ENCODE measurements at regions of chr1 and their contacts with region 1.

Region 1: DNA sequence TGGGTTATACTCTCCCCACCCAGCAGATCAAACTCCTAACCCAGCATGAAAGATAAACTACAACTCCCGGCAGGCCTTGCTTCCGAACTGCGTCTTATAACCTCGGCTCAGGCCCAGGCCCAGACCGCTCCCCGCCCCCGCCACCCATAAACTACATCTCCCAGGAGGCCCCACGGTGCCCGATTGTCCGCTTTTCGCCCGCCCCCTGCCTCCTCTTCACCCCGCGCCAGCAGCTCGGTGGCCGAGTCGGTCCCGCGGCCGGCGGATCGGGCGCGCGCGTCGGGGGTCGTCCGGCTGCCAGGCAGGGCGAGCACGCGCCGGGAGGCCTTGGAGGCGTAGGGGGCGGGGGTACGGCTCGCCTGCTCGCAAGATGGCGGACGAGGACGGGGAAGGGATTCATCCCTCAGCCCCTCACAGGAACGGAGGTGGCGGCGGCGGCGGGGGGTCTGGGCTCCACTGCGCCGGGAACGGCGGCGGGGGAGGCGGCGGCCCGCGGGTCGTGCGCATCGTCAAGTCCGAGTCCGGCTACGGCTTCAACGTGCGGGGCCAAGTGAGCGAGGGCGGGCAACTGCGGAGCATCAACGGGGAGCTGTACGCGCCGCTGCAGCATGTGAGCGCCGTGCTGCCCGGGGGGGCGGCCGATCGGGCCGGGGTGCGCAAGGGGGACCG is at the start of gene SNX27:
- DNase-seq: peak; percentile 94
- H3K4me3 Mint-ChIP-seq: peak within 1 kb of the TSS; percentile 93
- H3K27ac Mint-ChIP-seq: peak within 1 kb of the TSS; percentile 72
- H3K4me1 Mint-ChIP-seq: peaks cover 48% of the 10 kb centered on the region
- H3K27me3 Mint-ChIP-seq: peaks cover 3% of the 10 kb centered on the region
- total RNA-seq, gene SNX27: 22.9 to 23.6 TPM

Region 2: GRCh38 chr1:151254217-151255213 is 357.5 kb before region 1 on chr1 and contains the start of gene PSMD4:
- CTCF ChIA-PET with region 1: interaction called, 3 read pairs
- intact Hi-C with region 1: loop called (anchors 1 kb)
- DNase-seq: peak; percentile 97
- H3K4me3 Mint-ChIP-seq: peak within 1 kb of the TSS; percentile 95
- H3K27ac Mint-ChIP-seq: peak within 1 kb of the TSS; percentile 92
- H3K4me1 Mint-ChIP-seq: peaks cover 31% of the 10 kb centered on the region
- H3K27me3 Mint-ChIP-seq: peaks cover 2% of the 10 kb centered on the region
- total RNA-seq, gene PSMD4: 167 to 192 TPM

Region 3: DNA sequence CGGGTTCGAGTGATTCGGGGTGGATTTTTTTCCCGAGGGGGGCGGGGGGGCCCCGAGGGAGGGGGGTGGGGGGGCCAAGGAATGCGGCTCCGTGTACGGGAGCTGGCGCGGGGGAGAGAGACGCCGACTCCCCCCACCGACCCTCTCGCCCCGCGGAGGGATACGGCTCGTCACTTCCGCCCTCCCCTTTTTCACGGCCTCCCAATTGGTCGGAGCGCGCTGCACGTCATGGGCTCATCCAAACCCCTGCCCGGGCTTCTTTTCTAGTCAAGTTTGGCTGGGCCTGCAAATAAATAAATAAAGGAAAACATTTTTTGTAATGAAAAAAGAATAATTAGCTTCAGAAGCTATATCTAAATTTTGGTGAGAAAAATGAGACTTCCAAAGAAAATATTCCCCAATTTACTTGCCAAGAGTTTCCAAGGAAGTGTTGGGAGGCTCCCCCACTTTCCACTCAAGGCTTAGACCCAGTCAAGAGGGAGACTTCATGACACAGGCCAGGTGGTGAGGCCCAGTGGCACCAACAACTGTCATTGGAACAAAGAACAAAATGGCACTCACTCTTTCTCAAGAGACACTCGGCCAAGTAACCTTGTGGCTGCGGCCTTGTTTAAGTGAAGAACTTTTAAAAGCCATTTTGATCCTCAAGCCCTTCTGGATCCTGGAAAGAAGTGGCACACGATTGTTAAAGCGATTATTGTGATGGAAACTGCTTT is 152.5 kb before region 1 on chr1 and contains the start of gene POGZ:
- CTCF ChIA-PET with region 1: no interaction called
- intact Hi-C with region 1: loop called (anchors 5 kb)
- DNase-seq: peak; percentile 97
- H3K4me3 Mint-ChIP-seq: peak within 1 kb of the TSS; percentile 78
- H3K27ac Mint-ChIP-seq: peak within 1 kb of the TSS; percentile 86
- H3K4me1 Mint-ChIP-seq: peaks cover 29% of the 10 kb centered on the region
- H3K27me3 Mint-ChIP-seq: peaks cover 11% of the 10 kb centered on the region
- total RNA-seq, gene POGZ: 69.7 to 73.7 TPM

Region 4: DNA sequence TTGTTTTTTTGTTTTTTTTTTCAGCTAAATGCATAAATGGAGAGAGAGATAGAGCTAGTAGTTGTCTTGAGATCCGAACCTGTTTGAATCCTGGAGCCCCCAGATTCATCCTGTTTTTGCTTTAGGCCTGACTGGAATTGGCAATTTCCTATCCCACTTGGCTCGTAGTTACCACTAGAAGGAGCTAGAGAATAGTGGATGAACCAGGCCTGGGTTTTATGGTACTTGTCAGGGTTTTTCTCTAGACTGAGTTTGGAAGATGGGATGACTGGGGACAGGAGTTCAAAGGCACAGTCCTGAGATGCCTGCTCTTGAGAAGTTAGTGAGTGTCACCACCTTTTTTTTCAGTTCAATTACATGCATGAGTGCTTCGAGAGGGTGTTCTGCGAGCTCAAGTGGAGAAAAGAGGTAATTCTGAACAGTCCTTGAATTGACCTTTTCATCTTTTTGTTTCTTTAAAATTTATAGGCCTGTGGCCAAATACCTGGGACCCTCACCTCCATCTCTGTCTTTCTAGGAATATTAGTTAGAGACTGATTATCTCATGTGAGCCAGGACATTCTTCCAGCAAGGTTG is 81.2 kb after region 1 on chr1:
- CTCF ChIA-PET with region 1: no interaction called
- intact Hi-C with region 1: no loop called
- DNase-seq: no peak
- H3K4me3 Mint-ChIP-seq: no peak overlapping the region
- H3K27ac Mint-ChIP-seq: no peak overlapping the region
- H3K4me1 Mint-ChIP-seq: no peaks in the 10 kb centered on the region
- H3K27me3 Mint-ChIP-seq: no peaks in the 10 kb centered on the region

Region 5: DNA sequence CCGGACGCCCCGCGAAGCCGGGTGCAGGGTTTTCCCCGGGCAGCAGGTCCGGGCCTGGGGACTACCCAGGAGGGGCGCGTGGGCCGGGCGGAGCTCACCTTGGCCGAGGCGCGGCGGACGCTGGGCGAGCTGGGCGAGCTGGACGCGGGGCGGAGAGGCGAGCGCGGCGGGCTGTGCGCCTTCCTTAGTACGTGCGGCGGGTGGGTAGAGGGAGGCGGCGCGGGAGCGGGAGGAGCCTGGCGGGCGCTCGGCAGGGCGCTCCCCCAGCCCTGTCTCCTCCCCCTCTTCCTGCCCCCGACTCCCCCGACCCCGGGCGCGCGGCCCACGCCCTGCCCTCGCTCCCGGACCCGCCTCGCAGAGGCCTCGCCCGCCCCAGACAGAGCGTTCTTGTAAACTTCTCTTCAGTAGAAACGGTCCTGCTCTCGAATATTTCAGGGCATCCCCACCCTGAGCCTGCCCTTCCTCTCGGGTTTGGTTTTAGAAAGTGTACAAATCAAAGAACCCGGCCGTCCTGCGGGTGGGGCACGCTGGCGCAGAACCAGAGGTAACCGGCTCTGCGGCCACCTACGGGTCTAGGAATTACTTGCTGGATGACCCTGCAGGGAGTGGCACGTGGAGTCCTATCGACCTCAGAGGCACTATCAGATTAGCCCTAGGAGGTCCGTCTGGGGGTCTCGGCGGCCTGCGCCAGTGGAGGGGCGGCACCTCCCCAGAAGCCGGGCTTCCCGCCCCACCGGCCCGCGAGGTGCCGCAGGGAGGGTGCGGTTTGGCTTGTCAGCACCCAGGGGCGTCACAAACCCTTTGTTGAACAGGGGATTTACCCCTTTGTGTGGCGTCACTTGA is 381.9 kb after region 1 on chr1 and contains the start of gene S100A10:
- CTCF ChIA-PET with region 1: no interaction called
- intact Hi-C with region 1: loop called (anchors 10 kb)
- DNase-seq: peak; percentile 73
- H3K4me3 Mint-ChIP-seq: peak within 1 kb of the TSS; percentile 94
- H3K27ac Mint-ChIP-seq: peak within 1 kb of the TSS; percentile 92
- H3K4me1 Mint-ChIP-seq: peaks cover 44% of the 10 kb centered on the region
- H3K27me3 Mint-ChIP-seq: no peaks in the 10 kb centered on the region
- total RNA-seq, gene S100A10: 159 to 170 TPM